Activated CD4-positive, alpha-beta T cell treated with anti-CD3 and anti-CD28 coated beads, Interleukin-2, amount 10 ng/mL, durations not matched to agents 7 days and 5 days (primary cell): ENCODE measurements at regions of chr2 and their contacts with region 1.

Region 1: GRCh38 chr2:43178602-43179542 is 47.5 kb downstream of the ZFP36L2 start:
- DNase-seq: peak; percentile 41
- H3K4me3 Mint-ChIP-seq: no peak overlapping the region
- H3K27ac Mint-ChIP-seq: peak overlapping the region; percentile 93
- H3K4me1 Mint-ChIP-seq: peaks cover 79% of the 10 kb centered on the region
- H3K27me3 Mint-ChIP-seq: no peaks in the 10 kb centered on the region

Region 2: GRCh38 chr2:43194121-43194869 is 15.4 kb after region 1 on chr2:
- CTCF ChIA-PET with region 1: interaction called, 28 read pairs
- POLR2A ChIA-PET with region 1: no interaction called
- DNase-seq: no peak
- H3K4me3 Mint-ChIP-seq: peak overlapping the region; percentile 90
- H3K27ac Mint-ChIP-seq: peak overlapping the region; percentile 96
- H3K4me1 Mint-ChIP-seq: peaks cover 59% of the 10 kb centered on the region
- H3K27me3 Mint-ChIP-seq: no peaks in the 10 kb centered on the region